Common myeloid progenitor, CD34-positive (primary cell): ENCODE measurements at regions of chr20 and their contacts with region 1.

Region 1: GRCh38 chr20:17938871-17939619 is 29.5 kb downstream of the SNX5 start:
- DNase-seq: peak; percentile 64 to 81 (median 80)
- H3K4me3 ChIP-seq: peak overlapping the region in 3 of 7 experiments; percentile 11 to 65 (median 17)
- H3K27ac ChIP-seq: peak overlapping the region in 1 of 2 experiments; percentile 6
- H3K4me1 ChIP-seq: peaks cover 0 to 29% (median 14%) of the 10 kb centered on the region in 4 experiments
- H3K27me3 ChIP-seq: no peaks in the 10 kb centered on the region

Region 2: DNA sequence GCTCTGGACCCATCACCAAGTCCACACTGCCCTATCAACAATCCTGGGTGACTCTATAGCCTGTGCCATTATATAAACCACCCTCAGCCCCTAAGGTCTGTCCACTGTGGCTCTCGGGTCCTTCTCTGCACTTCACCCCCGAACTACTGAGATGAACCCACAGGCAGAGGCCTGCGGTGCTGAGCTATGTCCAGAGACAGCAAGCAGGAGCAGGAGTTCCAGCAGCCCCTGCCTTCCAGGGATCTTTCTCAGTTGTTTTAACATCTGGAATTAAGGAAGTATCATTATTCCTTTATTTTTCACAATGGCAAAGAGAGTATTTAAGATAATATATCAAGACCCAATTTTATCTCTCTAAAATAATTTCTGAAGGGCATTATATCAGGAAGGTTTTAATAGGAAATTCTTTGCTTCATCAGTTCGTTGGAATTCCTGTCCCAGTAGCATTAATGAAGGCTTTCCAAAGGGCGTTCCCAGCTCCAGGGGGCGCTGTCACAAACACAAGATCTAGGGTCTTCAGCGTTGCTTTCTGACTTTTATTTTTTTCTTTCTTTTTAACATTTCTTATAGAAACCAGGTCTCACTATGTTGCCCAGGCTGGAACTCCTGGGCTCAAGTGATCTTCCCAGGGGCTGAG is 284.3 kb before region 1 on chr20:
- CTCF ChIA-PET with region 1: interaction called, 13 read pairs
- POLR2A ChIA-PET with region 1: no interaction called
- DNase-seq: peak; percentile 42 to 52 (median 44)
- H3K4me3 ChIP-seq: no peak overlapping the region
- H3K27ac ChIP-seq: no peak overlapping the region
- H3K4me1 ChIP-seq: peaks cover 12 to 35% (median 27%) of the 10 kb centered on the region in 4 experiments
- H3K27me3 ChIP-seq: no peaks in the 10 kb centered on the region

Region 3: DNA sequence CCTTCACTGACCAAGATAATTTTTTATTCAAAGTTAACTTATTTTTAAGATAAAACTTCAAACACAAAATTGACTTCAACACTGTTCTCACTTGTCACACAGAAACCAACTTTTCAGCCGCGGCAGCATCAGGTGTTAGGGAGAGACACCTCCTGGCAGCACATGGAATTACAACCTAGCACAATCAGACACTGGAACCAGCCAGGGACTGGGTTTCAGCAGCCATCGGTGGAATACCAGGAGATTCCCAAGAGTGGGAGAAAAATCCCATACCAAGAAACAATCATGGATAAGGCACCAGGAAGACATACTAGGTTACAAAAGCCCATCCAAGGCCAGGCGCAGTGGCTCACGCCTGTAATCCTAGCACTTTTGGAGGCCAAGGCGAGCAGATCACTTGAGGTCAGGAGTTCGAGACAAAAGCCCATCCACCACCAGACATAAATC is 40.5 kb before region 1 on chr20:
- CTCF ChIA-PET with region 1: interaction called, 25 read pairs
- POLR2A ChIA-PET with region 1: no interaction called
- DNase-seq: peak; percentile 55 to 82 (median 80)
- H3K4me3 ChIP-seq: no peak overlapping the region
- H3K27ac ChIP-seq: no peak overlapping the region
- H3K4me1 ChIP-seq: peaks cover 5 to 26% (median 15%) of the 10 kb centered on the region in 4 experiments
- H3K27me3 ChIP-seq: no peaks in the 10 kb centered on the region

Region 4: DNA sequence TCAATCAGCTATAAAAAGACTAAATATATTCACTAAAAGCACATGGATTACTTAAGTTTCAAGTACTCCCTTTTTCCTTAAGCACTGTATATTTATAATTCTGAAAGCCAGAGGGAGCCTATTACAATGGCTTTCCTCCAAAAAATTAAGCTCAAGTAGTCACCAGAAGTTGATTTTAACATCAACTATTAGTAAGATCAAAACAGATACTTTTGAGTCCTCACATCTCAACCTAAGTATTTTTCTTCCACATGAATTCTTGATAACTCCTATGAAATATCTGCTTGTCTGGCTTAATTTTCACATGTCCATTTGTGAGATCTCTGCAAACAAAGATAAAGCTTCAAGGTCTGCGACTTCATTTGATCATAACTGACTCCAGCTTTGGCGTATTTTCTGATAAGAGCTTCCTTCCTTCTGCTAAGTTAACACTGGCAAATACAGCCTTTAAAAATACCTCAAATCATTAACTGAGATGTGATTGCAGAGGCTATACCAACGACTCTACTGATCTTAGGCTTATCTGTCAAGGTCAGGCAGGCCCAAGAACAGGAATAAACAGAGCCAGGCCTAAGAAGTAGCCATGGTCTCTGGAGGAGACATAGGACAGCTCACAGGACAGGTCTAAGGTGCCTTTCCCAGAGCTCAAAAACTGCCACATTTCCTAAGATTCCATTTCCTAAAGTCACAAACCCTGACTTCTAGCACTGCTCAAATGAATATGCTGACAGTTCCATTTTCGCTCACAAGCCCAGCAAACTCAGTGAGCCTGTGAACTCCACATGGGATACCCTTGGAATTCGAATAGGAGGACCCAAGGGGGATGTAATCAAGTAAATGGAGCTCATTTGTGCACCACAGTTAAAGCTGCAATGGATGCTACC is 19.6 kb after region 1 on chr20:
- CTCF ChIA-PET with region 1: interaction called, 108 read pairs
- POLR2A ChIA-PET with region 1: no interaction called
- DNase-seq: peak in 2 of 3 donors; percentile 51 to 75
- H3K4me3 ChIP-seq: peak overlapping the region in 3 of 7 experiments; percentile 8 to 58 (median 34)
- H3K27ac ChIP-seq: peak overlapping the region; percentile 47 to 77
- H3K4me1 ChIP-seq: peaks cover 57 to 88% (median 71%) of the 10 kb centered on the region in 4 experiments
- H3K27me3 ChIP-seq: no peaks in the 10 kb centered on the region

Region 5: DNA sequence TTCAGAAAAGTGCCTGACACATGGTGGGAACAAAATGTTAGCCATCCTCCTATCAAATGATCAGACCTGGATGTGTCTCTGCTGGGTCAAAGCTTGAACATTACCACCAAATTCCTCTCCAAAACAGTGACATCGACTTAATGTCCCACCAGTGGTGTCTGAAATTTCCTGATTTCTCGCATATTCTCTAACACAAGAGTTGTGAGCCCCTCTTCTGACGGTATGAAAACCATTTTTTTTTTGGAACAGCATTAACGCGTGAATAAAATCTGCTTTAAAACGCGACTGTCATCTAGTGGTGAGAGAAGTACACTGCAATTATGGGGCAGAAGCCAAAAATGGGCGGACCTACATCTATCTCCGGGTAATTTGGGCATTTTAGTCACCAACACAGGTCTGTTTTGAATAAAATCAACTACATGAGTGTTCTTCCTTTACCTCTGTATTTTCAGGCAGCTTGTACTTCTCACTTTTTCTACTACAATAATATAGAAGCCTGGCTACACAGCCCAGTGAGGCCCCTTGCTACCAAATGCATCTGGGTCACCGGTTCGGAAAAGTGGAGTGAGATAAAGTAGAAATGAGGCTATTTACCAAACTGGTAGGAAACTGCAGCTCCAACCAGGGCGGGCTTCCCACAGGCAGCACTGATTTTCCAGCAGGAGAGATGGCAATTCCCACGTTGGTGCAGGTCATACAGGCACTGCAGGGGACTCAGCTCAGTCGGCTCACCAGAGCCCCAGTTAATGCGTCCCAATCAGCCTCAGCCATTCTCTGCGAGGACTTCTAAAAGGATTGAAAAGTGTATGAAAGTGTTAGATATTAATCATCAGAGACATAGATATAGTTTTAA is 57.1 kb after region 1 on chr20:
- CTCF ChIA-PET with region 1: interaction called, 12 read pairs
- POLR2A ChIA-PET with region 1: no interaction called
- DNase-seq: peak; percentile 72 to 85 (median 80)
- H3K4me3 ChIP-seq: peak overlapping the region in 1 of 7 experiments; percentile 7
- H3K27ac ChIP-seq: no peak overlapping the region
- H3K4me1 ChIP-seq: peaks cover 5 to 21% (median 11%) of the 10 kb centered on the region in 4 experiments
- H3K27me3 ChIP-seq: no peaks in the 10 kb centered on the region

Region 6: GRCh38 chr20:18031050-18031449 is 92.0 kb after region 1 on chr20:
- CTCF ChIA-PET with region 1: no interaction called
- POLR2A ChIA-PET with region 1: no interaction called
- DNase-seq: no peak
- H3K4me3 ChIP-seq: no peak overlapping the region
- H3K27ac ChIP-seq: no peak overlapping the region
- H3K4me1 ChIP-seq: no peaks in the 10 kb centered on the region
- H3K27me3 ChIP-seq: no peaks in the 10 kb centered on the region

Region 7: DNA sequence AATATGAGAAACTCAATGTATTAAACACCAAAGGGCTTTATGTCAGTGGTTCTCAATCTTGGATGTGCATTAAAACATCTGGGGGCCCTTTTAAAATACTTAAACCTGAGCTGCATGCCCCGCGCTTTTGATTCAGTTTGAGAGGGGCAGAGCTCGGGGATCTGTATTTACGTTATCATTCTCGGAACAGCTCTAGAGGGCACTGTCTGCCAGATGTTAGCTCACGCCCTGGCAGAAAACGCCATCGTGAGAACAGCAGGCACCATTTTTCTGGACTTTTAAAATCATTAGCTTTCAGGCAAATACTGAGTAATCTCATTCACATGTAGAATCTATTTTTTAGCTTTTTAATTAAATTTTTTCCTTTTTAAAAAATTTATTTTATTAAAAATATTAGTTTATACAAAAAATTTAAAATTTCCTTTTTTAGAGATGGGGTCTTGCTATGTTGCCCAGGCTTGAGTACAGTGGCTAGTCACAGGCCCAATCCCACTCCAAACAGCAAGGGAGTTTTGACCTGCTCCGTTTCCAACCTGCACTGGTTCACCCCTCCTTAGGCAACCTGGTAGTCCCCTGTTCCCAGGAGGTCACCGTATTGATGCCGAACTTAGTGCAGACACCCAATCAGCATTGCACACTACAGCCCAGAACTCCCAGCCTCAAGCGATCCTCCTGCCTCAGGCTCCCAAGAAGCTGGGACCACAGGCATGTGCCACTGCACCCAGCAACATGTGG is 319.2 kb after region 1 on chr20:
- CTCF ChIA-PET with region 1: no interaction called
- POLR2A ChIA-PET with region 1: no interaction called
- DNase-seq: no peak
- H3K4me3 ChIP-seq: no peak overlapping the region
- H3K27ac ChIP-seq: no peak overlapping the region
- H3K4me1 ChIP-seq: peaks cover 0 to 10% (median 9%) of the 10 kb centered on the region in 4 experiments
- H3K27me3 ChIP-seq: no peaks in the 10 kb centered on the region